CD8-positive, alpha-beta T cell (primary cell): ENCODE measurements at regions of chr17 and their contacts with region 1.

Region 1: GRCh38 chr17:44473367-44473766 is 29.8 kb downstream of the GPATCH8 start:
- DNase-seq: no peak
- ATAC-seq: no peak
- H3K4me3 ChIP-seq: no peak overlapping the region
- H3K4me3 Mint-ChIP-seq: no peak overlapping the region
- H3K27ac ChIP-seq: no peak overlapping the region
- H3K27ac Mint-ChIP-seq: no peak overlapping the region
- H3K4me1 ChIP-seq: no peaks in the 10 kb centered on the region
- H3K4me1 Mint-ChIP-seq: peaks cover 35% of the 10 kb centered on the region
- H3K27me3 ChIP-seq: no peaks in the 10 kb centered on the region
- H3K27me3 Mint-ChIP-seq: no peaks in the 10 kb centered on the region
- CTCF ChIP-seq: no peak

Region 2: GRCh38 chr17:44417553-44417952 is 55.8 kb before region 1 on chr17:
- CTCF ChIA-PET with region 1: no interaction called
- POLR2A ChIA-PET with region 1: no interaction called
- intact Hi-C with region 1: loop called in 1 of 2 experiments (anchors 2 kb)
- DNase-seq: no peak
- ATAC-seq: no peak
- H3K4me3 ChIP-seq: no peak overlapping the region
- H3K4me3 Mint-ChIP-seq: no peak overlapping the region
- H3K27ac ChIP-seq: no peak overlapping the region
- H3K27ac Mint-ChIP-seq: no peak overlapping the region
- H3K4me1 ChIP-seq: no peaks in the 10 kb centered on the region
- H3K4me1 Mint-ChIP-seq: no peaks in the 10 kb centered on the region
- H3K27me3 ChIP-seq: no peaks in the 10 kb centered on the region
- H3K27me3 Mint-ChIP-seq: no peaks in the 10 kb centered on the region
- CTCF ChIP-seq: no peak